Dorsolateral prefrontal cortex (tissue), 120 donors: ENCODE measurements at regions of chr15 and their contacts with region 1.

Region 1: GRCh38 chr15:99704444-99704838 is 28.8 kb downstream of the LYSMD4 start:
- DNase-seq: peak in 1 of 10 donors; percentile 46
- H3K4me3 ChIP-seq: peak overlapping the region in 17 of 59 donors; percentile 2 to 51 (median 22)
- H3K27ac ChIP-seq: peak overlapping the region in 53 of 59 donors; percentile 13 to 93 (median 81)
- H3K27me3 ChIP-seq: no peaks in the 10 kb centered on the region
- CTCF ChIP-seq: peak; percentile 78 to 95 (median 88)

Region 2: DNA sequence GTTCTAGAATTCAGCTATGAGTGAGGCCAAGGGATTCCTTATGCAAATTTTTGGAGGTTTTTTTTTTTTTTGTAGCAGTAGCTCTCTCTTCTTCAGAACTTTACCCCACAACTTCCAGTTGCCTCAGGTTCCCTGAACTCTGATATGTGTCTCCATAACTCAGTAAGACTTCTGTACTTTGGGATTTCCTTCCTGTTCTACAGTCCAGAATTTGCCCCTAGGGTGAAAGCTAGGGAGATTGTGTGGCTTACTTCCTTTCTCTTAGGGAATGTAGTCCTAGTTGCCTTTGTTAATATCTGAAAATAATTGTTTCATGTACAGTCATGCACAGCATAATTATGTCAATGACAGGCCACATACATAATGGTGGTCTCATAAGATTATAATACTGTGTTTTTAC is 422.3 kb before region 1 on chr15:
- intact Hi-C with region 1: loop called in 1 of 2 experiments (anchors 5 kb)
- DNase-seq: no peak
- H3K4me3 ChIP-seq: no peak overlapping the region
- H3K27ac ChIP-seq: no peak overlapping the region
- H3K27me3 ChIP-seq: no peaks in the 10 kb centered on the region
- CTCF ChIP-seq: no peak

Region 3: DNA sequence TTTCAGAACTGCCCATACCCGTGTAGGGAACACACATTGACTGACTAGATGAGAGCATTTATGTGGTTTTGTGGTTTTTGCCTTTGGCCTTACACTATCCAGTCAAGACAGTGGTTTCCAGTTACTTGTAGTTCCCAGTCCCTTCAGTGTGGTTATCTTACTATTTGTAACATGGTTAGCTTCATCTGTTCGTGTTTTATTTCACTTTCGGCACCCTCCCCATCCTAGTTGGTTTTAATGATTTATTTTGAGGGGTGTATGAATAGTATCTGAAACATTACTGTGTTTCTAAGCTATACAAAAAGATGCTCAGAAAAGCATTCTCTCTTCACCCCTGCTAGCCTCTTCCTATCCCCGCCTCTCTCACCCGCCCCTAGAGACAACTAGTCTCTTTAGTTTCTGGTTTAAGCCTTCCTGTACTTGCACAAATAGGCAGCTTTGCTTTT is 14.7 kb after region 1 on chr15:
- intact Hi-C with region 1: no loop called
- DNase-seq: no peak
- H3K4me3 ChIP-seq: no peak overlapping the region
- H3K27ac ChIP-seq: no peak overlapping the region
- H3K27me3 ChIP-seq: no peaks in the 10 kb centered on the region
- CTCF ChIP-seq: no peak

Region 4: DNA sequence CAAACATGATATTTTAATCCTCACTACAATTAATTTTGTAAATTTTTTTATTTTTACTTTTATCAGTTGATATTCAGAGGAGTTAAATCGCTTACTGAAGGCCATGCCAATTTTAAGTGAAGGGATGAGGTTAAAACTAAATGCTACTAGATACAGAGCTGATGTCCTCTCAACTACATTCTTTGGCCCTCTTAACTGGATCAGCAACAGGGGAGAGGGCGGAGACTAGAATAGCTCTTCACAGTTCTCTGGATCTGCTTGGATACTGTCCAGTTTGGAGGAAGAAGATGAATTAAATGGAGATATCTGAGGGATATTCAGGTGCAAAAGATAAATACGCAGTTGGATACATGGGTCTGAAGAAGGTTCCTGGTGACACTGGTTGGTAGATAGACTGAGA is 114.4 kb after region 1 on chr15:
- intact Hi-C with region 1: no loop called
- DNase-seq: no peak
- H3K4me3 ChIP-seq: no peak overlapping the region
- H3K27ac ChIP-seq: no peak overlapping the region
- H3K27me3 ChIP-seq: no peaks in the 10 kb centered on the region
- CTCF ChIP-seq: no peak

Region 5: DNA sequence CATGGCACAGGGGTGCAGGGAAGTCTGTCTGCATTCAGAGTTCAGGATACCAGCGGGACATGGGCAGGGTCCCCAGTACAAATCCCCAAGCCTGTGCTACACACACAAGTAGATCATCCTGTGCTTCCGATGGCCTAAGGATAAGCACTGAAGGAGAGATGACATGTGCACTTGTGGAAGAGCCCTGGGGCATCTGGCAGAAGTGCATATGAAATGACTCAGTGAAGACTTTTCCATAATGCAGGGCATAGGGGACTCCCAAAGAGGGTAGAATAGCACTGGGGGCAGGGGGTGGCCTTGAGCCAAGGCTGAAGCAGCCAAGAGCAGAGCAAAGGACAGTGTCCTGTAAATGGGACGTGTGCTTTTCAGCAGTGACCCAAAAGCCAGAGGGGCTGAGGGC is 614.4 kb after region 1 on chr15:
- intact Hi-C with region 1: no loop called
- DNase-seq: no peak
- H3K4me3 ChIP-seq: no peak overlapping the region
- H3K27ac ChIP-seq: no peak overlapping the region
- H3K27me3 ChIP-seq: no peaks in the 10 kb centered on the region
- CTCF ChIP-seq: no peak